ENCODE measurements at regions of chr2 and their contacts with region 1.

Region 1: GRCh38 chr2:38115216-38116032 is 39.5 kb upstream of the CYP1B1 start:
- DNase-seq: peak; percentile 92
- H3K4me3 Mint-ChIP-seq: no peak overlapping the region
- H3K27ac Mint-ChIP-seq: no peak overlapping the region
- H3K4me1 Mint-ChIP-seq: no peaks in the 10 kb centered on the region
- H3K27me3 Mint-ChIP-seq: peaks cover 13% of the 10 kb centered on the region

Region 2: GRCh38 chr2:37896314-37896713 is 219.1 kb before region 1 on chr2:
- CTCF ChIA-PET with region 1: interaction called, 4 read pairs
- intact Hi-C with region 1: loop called (anchors 1 kb)
- DNase-seq: peak; percentile 23
- H3K4me3 Mint-ChIP-seq: no peak overlapping the region
- H3K27ac Mint-ChIP-seq: no peak overlapping the region
- H3K4me1 Mint-ChIP-seq: peaks cover 25% of the 10 kb centered on the region
- H3K27me3 Mint-ChIP-seq: no peaks in the 10 kb centered on the region

Region 3: DNA sequence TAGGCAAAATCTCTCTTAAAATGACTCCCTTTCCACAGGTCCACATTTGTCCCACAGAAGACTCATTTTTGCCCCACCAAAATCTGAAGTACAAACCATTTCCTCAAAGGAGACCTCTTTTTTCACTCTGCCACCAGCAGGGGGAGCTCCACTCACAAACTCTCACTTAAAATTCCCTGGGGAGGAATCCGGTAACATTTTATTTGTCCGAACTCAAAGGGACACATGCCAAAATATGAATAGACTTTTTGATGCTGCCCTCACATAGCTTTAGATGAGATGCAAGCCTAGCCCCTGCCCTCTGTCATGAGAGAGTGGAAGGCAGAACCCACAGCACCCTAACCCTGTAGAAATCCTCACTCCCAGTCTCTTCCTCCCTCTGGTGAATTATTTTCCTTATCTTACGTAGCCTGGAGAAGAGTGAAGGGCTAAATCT is 133.3 kb before region 1 on chr2:
- CTCF ChIA-PET with region 1: interaction called, 9 read pairs
- intact Hi-C with region 1: loop called (anchors 1 kb)
- DNase-seq: peak; percentile 73
- H3K4me3 Mint-ChIP-seq: no peak overlapping the region
- H3K27ac Mint-ChIP-seq: no peak overlapping the region
- H3K4me1 Mint-ChIP-seq: peaks cover 6% of the 10 kb centered on the region
- H3K27me3 Mint-ChIP-seq: no peaks in the 10 kb centered on the region

Region 4: DNA sequence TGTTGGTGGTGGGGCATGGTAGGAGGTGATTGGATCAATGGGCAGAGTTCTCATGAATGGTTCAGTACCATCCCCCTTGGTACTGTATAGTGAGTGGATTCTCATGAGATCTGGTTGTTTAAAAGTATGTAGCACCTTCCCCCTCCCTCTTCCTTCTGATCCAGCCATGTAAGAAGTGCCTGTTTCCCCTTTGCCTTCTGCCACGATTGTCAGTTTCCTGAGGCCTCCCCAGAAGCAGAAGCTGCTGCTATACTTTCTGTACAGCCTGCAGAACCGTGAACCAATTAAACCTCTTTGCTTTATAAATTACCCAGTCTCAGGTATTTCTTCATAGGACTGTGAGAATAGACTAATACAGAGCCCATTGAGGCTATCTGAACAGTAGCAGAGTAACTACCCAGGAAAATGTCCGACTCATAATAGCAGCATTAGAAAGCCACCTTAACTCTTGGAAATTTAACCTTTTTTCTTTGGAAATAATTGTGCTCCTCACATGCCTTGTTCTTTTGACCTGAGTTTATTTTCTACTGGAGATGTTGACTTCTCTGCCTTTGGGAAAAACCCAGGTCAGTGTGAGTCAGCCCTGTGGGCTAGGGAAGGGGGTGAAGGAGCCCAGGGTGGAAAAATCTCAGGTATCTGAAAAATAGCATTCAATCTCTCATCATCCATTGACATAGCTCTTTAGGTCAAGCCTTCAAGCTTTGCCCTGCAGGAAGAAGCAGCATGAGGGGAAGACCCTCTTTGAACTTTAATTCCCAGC is 57.6 kb before region 1 on chr2:
- CTCF ChIA-PET with region 1: no interaction called
- intact Hi-C with region 1: loop called (anchors 5 kb)
- DNase-seq: peak; percentile 27
- H3K4me3 Mint-ChIP-seq: no peak overlapping the region
- H3K27ac Mint-ChIP-seq: no peak overlapping the region
- H3K4me1 Mint-ChIP-seq: peaks cover 19% of the 10 kb centered on the region
- H3K27me3 Mint-ChIP-seq: peaks cover 2% of the 10 kb centered on the region

Region 5: GRCh38 chr2:38068234-38068633 is 47.2 kb before region 1 on chr2:
- CTCF ChIA-PET with region 1: no interaction called
- intact Hi-C with region 1: no loop called
- DNase-seq: no peak
- H3K4me3 Mint-ChIP-seq: no peak overlapping the region
- H3K27ac Mint-ChIP-seq: no peak overlapping the region
- H3K4me1 Mint-ChIP-seq: no peaks in the 10 kb centered on the region
- H3K27me3 Mint-ChIP-seq: peaks cover 12% of the 10 kb centered on the region

Region 6: DNA sequence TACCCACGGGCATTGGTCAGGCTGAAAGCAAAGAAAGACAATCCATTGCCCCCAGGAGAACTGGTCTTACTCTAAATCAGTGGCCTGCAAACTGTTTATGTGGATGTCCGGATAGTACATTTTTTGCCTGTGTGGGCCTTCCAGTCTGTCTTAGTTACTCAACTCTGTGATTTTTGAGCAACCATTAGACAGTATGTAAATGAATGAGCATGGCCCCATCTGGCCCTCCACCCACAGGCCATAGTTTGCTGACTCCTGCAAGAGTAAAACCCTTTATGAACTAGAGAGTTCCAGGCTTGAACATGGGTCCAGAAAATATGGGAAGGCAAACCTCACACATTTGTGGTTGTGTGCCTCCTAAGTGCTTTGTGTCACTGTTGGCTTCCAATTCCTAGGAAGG is 16.3 kb after region 1 on chr2:
- CTCF ChIA-PET with region 1: no interaction called
- intact Hi-C with region 1: no loop called
- DNase-seq: no peak
- H3K4me3 Mint-ChIP-seq: no peak overlapping the region
- H3K27ac Mint-ChIP-seq: no peak overlapping the region
- H3K4me1 Mint-ChIP-seq: no peaks in the 10 kb centered on the region
- H3K27me3 Mint-ChIP-seq: peaks cover 4% of the 10 kb centered on the region

Region 7: GRCh38 chr2:38159597-38159996 is 44.2 kb after region 1 on chr2:
- CTCF ChIA-PET with region 1: no interaction called
- intact Hi-C with region 1: no loop called
- DNase-seq: no peak
- H3K4me3 Mint-ChIP-seq: no peak overlapping the region
- H3K27ac Mint-ChIP-seq: no peak overlapping the region
- H3K4me1 Mint-ChIP-seq: no peaks in the 10 kb centered on the region
- H3K27me3 Mint-ChIP-seq: peaks cover 5% of the 10 kb centered on the region

Region 8: GRCh38 chr2:38174646-38175423 is 59.4 kb after region 1 on chr2:
- CTCF ChIA-PET with region 1: no interaction called
- intact Hi-C with region 1: no loop called
- DNase-seq: no peak
- H3K4me3 Mint-ChIP-seq: no peak overlapping the region
- H3K27ac Mint-ChIP-seq: no peak overlapping the region
- H3K4me1 Mint-ChIP-seq: no peaks in the 10 kb centered on the region
- H3K27me3 Mint-ChIP-seq: peaks cover 2% of the 10 kb centered on the region

Region 9: DNA sequence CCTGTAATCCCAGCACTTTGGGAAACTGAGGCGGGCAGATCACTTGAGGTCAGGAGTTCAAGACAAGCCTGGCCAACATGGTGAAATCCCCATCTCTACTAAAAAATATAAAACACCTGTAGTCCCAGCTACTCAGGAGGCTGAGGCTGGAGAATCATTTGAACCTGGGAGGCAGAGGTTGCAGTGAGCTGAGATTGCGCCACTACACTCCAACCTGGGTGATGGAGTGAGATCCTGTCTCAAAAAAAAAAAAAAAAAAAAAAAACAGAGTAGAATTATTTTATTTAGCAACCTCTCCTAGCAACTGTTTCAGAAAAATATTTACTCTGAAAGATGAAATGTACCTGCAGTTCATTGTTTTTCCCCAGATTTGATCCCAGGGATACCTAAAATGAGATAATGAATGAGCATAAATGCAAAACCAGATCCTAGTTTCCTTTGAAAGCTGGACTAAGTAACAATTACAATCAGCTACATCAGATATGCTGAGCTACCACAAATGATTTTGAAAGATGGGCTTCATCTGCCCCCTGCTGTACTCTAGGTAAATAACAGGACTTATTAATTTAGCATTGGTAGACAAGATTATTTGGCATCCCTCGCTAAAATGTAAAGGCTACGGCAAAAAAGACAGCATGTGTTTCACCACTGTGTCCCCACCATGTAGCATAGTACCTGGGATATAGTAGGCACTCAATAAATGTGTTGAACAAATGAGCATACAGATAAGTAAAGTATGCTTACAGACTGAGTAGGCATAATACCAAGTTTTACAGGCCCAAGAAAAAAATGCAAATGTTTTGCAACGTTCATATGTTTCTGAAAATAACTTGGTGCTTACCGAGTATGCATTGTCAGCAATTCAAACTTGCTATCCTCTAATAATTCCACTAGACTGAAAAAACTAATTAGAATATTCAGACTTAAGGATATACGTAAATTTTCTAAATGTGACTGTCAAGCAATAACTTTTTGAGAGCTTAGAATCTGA is 159.2 kb after region 1 on chr2:
- CTCF ChIA-PET with region 1: interaction called, 6 read pairs
- intact Hi-C with region 1: loop called (anchors 1 kb)
- DNase-seq: peak; percentile 53
- H3K4me3 Mint-ChIP-seq: no peak overlapping the region
- H3K27ac Mint-ChIP-seq: no peak overlapping the region
- H3K4me1 Mint-ChIP-seq: peaks cover 2% of the 10 kb centered on the region
- H3K27me3 Mint-ChIP-seq: no peaks in the 10 kb centered on the region

Measured in activated naive CD4-positive, alpha-beta T cell treated with anti-CD3 and anti-CD28 coated beads for 36 hours (primary cell).